ENCODE measurements at regions of chr9 and their contacts with region 1.

Region 1: DNA sequence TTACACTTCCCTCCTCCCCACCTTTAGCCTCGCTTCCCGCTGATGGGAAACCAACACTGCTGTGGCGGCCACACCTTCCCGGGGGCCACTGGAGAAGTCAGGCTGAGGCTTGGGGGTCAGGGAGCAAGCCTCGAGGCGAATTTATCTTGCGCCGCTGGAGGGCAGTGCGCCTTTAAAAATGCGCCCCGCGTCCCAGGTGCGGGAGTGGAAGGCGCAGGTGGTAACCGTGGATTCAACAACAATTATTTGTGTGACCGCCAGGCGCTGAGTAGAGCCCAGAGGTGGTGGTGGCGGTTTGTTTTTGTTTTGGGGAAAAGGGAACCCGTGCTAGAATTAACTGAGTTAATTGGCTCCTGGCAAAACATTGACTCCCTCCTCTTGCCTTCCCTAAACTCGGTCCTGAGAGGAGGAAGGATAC is 1.1 kb downstream of the CFAP77 start:
- DNase-seq: peak; percentile 73
- H3K4me3 Mint-ChIP-seq: peak overlapping the region; percentile 52
- H3K27ac Mint-ChIP-seq: no peak overlapping the region
- H3K4me1 Mint-ChIP-seq: peaks cover 9% of the 10 kb centered on the region
- H3K27me3 Mint-ChIP-seq: peaks cover 31% of the 10 kb centered on the region
- CTCF ChIP-seq: peak; percentile 64

Region 2: DNA sequence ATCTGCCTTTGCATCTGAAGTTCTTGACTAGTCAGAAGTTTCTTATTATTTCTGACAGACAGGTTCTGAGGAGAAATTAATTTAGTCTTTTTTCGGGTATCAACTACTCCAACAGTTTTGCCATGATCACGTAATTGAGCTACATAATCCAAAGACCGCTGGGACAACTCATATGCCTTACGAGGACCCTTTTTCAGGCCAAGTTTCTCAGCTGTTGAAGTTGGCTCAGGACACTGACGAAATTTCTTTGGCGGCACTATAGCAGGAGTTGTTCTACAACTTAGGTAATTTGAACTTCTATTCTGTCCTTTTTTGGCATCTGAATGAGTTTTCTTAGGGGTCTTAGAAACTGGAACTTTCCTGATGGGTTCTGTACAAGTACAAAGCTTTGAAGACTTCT is 83.6 kb before region 1 on chr9:
- CTCF ChIA-PET with region 1: no interaction called
- intact Hi-C with region 1: no loop called
- DNase-seq: no peak
- H3K4me3 Mint-ChIP-seq: no peak overlapping the region
- H3K27ac Mint-ChIP-seq: no peak overlapping the region
- H3K4me1 Mint-ChIP-seq: peaks cover 17% of the 10 kb centered on the region
- H3K27me3 Mint-ChIP-seq: no peaks in the 10 kb centered on the region
- CTCF ChIP-seq: no peak

Region 3: DNA sequence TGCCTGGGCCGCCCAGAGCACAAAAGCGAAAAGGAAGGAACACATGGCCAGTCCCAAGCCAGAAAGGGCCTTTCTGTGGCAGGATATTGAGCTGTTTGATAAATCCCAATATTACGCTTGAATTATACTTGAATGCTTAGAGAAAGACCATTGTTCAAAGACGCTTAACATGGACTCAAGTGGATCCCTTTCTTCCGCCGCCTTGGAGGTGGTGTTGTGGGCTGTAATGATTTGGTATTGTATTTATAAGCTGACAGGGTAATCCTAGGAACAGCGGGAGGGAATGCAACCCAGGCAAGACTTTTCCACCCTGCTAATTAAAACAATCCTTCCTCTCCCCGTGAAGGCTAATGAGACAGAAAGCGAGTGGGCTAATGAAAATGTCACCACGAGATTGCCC is 23.8 kb after region 1 on chr9:
- CTCF ChIA-PET with region 1: no interaction called
- intact Hi-C with region 1: no loop called
- DNase-seq: no peak
- H3K4me3 Mint-ChIP-seq: no peak overlapping the region
- H3K27ac Mint-ChIP-seq: no peak overlapping the region
- H3K4me1 Mint-ChIP-seq: no peaks in the 10 kb centered on the region
- H3K27me3 Mint-ChIP-seq: peaks cover 65% of the 10 kb centered on the region
- CTCF ChIP-seq: no peak

Region 4: GRCh38 chr9:132502480-132502879 is 91.4 kb after region 1 on chr9:
- CTCF ChIA-PET with region 1: no interaction called
- intact Hi-C with region 1: loop called (anchors 2 kb)
- DNase-seq: no peak
- H3K4me3 Mint-ChIP-seq: no peak overlapping the region
- H3K27ac Mint-ChIP-seq: no peak overlapping the region
- H3K4me1 Mint-ChIP-seq: no peaks in the 10 kb centered on the region
- H3K27me3 Mint-ChIP-seq: peaks cover 48% of the 10 kb centered on the region
- CTCF ChIP-seq: no peak

Region 5: DNA sequence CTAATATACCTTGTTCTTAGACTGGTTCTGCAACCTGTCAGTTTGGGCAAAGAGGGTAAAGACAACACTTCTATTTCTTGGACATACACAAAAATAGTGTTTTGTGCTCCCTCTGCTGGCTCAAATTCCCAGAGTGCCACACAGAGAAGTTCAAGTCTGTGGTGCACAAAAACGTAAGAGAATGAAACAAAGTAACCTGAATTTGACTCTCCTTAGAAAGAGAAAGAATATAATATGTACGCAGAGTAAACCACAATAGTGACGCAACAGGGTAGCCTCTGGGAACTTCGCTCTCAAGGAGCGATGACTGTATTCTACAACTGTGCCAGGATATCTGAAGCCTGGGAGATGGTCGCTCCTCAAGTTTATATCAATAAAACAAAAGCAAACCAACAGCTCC is 240.2 kb after region 1 on chr9:
- CTCF ChIA-PET with region 1: no interaction called
- intact Hi-C with region 1: loop called (anchors 1 kb)
- DNase-seq: peak; percentile 22
- H3K4me3 Mint-ChIP-seq: no peak overlapping the region
- H3K27ac Mint-ChIP-seq: no peak overlapping the region
- H3K4me1 Mint-ChIP-seq: no peaks in the 10 kb centered on the region
- H3K27me3 Mint-ChIP-seq: no peaks in the 10 kb centered on the region
- CTCF ChIP-seq: no peak

Region 6: DNA sequence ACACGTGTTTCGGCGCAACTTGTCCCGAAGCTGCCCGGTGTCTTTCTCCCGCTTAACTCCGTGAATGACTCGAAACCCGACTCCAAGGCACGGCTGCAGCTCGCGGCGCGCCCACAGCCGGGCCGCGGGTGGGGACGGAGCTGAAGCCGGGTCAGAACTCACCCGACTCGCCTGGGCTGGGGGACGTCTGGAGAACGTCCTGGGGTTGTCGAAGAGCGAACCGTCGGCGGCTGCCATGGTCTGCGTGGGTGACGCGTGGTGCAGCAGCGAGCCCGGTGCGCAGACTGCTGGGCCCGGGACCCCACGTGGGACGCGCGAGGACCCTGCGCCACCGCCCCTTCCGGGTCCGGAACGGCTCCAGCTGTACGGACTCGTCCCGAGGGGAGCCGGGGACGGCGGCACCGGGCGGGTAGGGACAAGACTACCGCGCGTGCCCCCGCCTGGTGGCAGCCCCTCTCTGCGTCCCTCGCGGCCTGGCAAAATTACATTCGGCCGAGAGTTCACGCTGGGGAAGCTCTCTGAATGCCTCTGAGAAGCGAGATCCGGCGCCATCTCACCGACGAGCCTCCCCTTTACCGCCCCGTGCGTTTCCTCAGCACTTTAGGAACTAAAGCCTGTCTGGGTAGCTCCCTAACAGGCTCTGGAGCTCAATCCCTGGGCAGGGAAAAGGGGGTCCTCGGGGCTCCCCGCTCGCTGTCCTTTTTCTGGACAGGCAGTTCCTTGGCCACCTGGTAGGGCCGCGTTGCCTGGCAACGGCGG is 258.8 kb after region 1 on chr9 and contains the start of gene DDX31:
- CTCF ChIA-PET with region 1: no interaction called
- intact Hi-C with region 1: no loop called
- DNase-seq: peak; percentile 82
- H3K4me3 Mint-ChIP-seq: peak within 1 kb of the TSS; percentile 94
- H3K27ac Mint-ChIP-seq: peak within 1 kb of the TSS; percentile 72
- H3K4me1 Mint-ChIP-seq: peaks cover 29% of the 10 kb centered on the region
- H3K27me3 Mint-ChIP-seq: no peaks in the 10 kb centered on the region
- CTCF ChIP-seq: no peak
- total RNA-seq, gene DDX31: 18.4 and 20.1 TPM in 2 replicates